Head of caudate nucleus (tissue), 42 donors: ENCODE measurements at regions of chr1 and their contacts with region 1.

Region 1: GRCh38 chr1:19390901-19391595 is 78.9 kb downstream of the SLC66A1 start:
- DNase-seq: peak in 37 of 42 donors; percentile 35 to 83 (median 60)

Region 2: DNA sequence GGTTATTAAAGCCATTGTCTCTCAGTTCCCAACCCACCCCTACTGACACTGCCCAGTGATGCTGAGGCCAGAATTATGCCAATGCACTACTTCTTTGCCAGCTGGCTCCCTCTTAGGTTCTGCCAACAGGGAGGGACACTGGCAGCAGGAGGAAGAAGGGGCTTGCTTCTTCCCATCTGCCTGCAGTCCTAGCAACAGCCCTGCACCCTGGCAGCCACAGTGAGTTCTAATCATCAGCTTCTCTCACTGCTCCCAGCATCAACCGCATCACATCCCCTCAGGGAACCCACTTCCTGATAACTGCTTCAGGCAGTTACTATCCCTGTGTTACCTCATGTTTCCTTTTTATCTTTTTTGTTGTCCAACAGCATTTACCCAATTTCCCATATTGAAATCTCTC is 267.2 kb before region 1 on chr1:
- intact Hi-C with region 1: no loop called
- DNase-seq: peak in 27 of 42 donors; percentile 3 to 59 (median 29)

Region 3: GRCh38 chr1:19485362-19486187 is 94.5 kb after region 1 on chr1 and contains the start of gene CAPZB:
- intact Hi-C with region 1: loop called (anchors 10 kb)
- DNase-seq: peak; percentile 80 to 98 (median 96)

Region 4: GRCh38 chr1:19651141-19651737 is 260.2 kb after region 1 on chr1:
- intact Hi-C with region 1: loop called (anchors 10 kb)
- DNase-seq: peak in 37 of 42 donors; percentile 35 to 82 (median 67)